Panc1 (cell line): ENCODE measurements at regions of chr13 and their contacts with region 1.

Region 1: GRCh38 chr13:99505814-99506269 is 4.6 kb downstream of the TM9SF2 start:
- DNase-seq: no peak
- ATAC-seq: no peak
- H3K4me3 ChIP-seq: no peak overlapping the region
- H3K27ac ChIP-seq: no peak overlapping the region
- H3K4me1 ChIP-seq: peaks cover 8% of the 10 kb centered on the region
- H3K27me3 ChIP-seq: no peaks in the 10 kb centered on the region
- CTCF ChIP-seq: peak; percentile 19; the same call in 1 of the 2 replicates

Region 2: DNA sequence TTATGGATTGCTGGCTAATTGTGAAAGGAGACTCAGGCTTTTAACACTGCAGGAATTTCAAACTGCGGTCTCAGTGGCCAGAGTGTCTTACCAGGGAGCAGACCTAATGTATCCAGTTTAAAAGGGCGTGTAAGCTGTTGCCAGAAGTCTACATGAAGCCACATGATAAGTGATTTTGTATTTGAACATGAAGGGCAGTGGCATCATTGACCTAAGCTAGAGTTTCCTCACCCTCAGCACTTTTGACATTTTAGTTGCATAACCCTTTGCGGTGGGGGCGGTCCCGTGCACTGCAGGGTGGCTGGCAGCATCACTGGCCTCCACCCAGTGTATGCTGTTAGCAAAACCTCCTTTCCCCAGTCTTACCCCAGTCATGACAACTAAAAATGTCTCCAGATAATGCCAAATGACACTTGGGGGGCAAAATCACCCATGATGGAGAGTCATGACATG is 224.0 kb before region 1 on chr13:
- CTCF ChIA-PET with region 1: interaction called, 11 read pairs
- POLR2A ChIA-PET with region 1: no interaction called
- in situ Hi-C with region 1: no loop called
- intact Hi-C with region 1: no loop called
- DNase-seq: no peak
- ATAC-seq: no peak
- H3K4me3 ChIP-seq: no peak overlapping the region
- H3K27ac ChIP-seq: no peak overlapping the region
- H3K4me1 ChIP-seq: no peaks in the 10 kb centered on the region
- H3K27me3 ChIP-seq: no peaks in the 10 kb centered on the region
- CTCF ChIP-seq: no peak

Region 3: DNA sequence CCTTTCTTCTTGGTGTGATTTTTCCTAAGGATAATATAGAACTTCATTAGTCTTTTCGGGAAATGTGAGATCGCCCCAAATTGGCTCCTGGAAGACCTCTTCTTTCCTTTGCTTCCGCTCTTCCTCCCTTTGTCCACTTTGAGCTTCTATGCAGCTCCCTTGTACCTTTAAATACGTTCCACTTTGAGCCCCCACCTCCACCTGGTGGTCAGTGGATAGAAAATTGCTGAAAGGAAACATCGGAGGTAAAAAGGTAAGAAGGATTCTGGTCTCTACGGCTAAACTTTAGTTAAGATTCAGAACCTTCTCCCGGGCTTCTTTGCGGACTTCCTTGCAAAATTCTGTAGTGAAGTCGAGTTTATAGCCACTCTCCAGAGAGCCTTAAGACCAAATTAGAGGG is 59.6 kb before region 1 on chr13:
- CTCF ChIA-PET with region 1: interaction called, 14 read pairs
- POLR2A ChIA-PET with region 1: no interaction called
- in situ Hi-C with region 1: no loop called
- intact Hi-C with region 1: no loop called
- DNase-seq: no peak
- ATAC-seq: no peak
- H3K4me3 ChIP-seq: no peak overlapping the region
- H3K27ac ChIP-seq: no peak overlapping the region
- H3K4me1 ChIP-seq: no peaks in the 10 kb centered on the region
- H3K27me3 ChIP-seq: no peaks in the 10 kb centered on the region
- CTCF ChIP-seq: peak; percentile 20; the same call in 1 of the 2 replicates

Region 4: DNA sequence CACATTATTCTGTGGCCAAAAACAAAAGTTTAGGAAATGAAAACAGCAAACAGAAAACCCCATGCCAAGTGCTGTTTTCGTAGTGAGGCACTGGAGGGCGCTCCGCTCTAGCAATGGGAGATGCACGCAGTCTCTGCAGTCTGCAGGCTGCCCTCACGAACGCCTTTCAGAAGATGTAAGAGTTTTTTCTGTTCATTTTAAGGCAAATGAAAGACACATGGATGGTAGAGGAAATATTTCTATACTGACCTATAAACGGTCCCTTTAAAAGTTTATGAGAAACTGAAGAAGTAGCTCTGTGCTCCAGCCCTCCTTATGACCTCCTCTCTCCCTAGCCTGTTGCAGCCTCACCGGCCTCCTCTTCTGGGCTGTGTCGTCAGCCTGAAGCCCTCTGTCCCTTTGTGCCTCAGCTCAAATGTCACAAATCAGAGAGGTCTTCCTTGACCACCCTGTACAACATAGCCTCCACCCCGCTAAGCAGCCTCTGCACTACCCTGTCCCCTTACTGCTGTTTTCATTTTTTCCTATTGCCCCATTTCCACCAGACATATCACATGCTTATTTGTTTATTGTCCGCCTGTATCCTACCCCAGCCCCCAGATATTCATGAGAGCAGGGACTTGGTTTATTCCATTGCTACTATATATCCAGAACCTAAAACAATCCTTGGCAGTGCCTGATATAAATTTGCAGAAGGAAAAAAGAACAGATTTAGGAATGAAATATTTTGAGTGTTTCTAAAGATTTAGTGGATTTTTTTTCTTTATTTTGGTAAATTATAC is 111.8 kb after region 1 on chr13:
- CTCF ChIA-PET with region 1: no interaction called
- POLR2A ChIA-PET with region 1: no interaction called
- in situ Hi-C with region 1: no loop called
- intact Hi-C with region 1: no loop called
- DNase-seq: peak; percentile 18
- ATAC-seq: peak; percentile 81
- H3K4me3 ChIP-seq: no peak overlapping the region
- H3K27ac ChIP-seq: no peak overlapping the region
- H3K4me1 ChIP-seq: no peaks in the 10 kb centered on the region
- H3K27me3 ChIP-seq: no peaks in the 10 kb centered on the region
- CTCF ChIP-seq: peak; percentile 80